ENCODE measurements at regions of chr10 and their contacts with region 1.

Region 1: GRCh38 chr10:38010119-38010903 is at the start of gene ZNF33A:
- DNase-seq: peak; percentile 92
- ATAC-seq: peak; percentile 87
- H3K4me3 Mint-ChIP-seq: peak within 1 kb of the TSS; percentile 79
- H3K27ac Mint-ChIP-seq: peak within 1 kb of the TSS; percentile 99
- H3K4me1 Mint-ChIP-seq: peaks cover 25% of the 10 kb centered on the region
- H3K27me3 Mint-ChIP-seq: no peaks in the 10 kb centered on the region
- total RNA-seq, gene ZNF33A: 26.1 to 26.6 TPM

Region 2: GRCh38 chr10:37965006-37965405 is 45.3 kb before region 1 on chr10:
- CTCF ChIA-PET with region 1: no interaction called
- POLR2A ChIA-PET with region 1: no interaction called
- DNase-seq: no peak
- ATAC-seq: no peak
- H3K4me3 Mint-ChIP-seq: no peak overlapping the region
- H3K27ac Mint-ChIP-seq: no peak overlapping the region
- H3K4me1 Mint-ChIP-seq: no peaks in the 10 kb centered on the region
- H3K27me3 Mint-ChIP-seq: no peaks in the 10 kb centered on the region

Region 3: GRCh38 chr10:37976091-37976879 is 34.0 kb before region 1 on chr10 and contains the start of gene ZNF25:
- CTCF ChIA-PET with region 1: interaction called, 13 read pairs
- POLR2A ChIA-PET with region 1: interaction called, 26 read pairs
- DNase-seq: peak; percentile 99
- ATAC-seq: peak; percentile 92
- H3K4me3 Mint-ChIP-seq: peak within 1 kb of the TSS; percentile 90
- H3K27ac Mint-ChIP-seq: peak within 1 kb of the TSS; percentile 96
- H3K4me1 Mint-ChIP-seq: peaks cover 25% of the 10 kb centered on the region
- H3K27me3 Mint-ChIP-seq: no peaks in the 10 kb centered on the region
- total RNA-seq, gene ZNF25: 4.4 to 5.0 TPM

Measured in activated CD8-positive, alpha-beta T cell treated with anti-CD3 and anti-CD28 coated beads, Interleukin-2, amount 10 ng/mL, durations not matched to agents 7 days and 5 days (primary cell).